ENCODE measurements at regions of chr2 and their contacts with region 1.

Region 1: GRCh38 chr2:233251306-233252116 is at the start of gene ATG16L1:
- DNase-seq: peak; percentile 89 to 98 (median 94)
- ATAC-seq: peak; percentile 91
- H3K4me3 ChIP-seq: peak within 1 kb of the TSS; percentile 90
- H3K4me3 Mint-ChIP-seq: peak within 1 kb of the TSS; percentile 90
- H3K27ac ChIP-seq: peak within 1 kb of the TSS; percentile 72 to 88
- H3K27ac Mint-ChIP-seq: peak within 1 kb of the TSS; percentile 76
- H3K4me1 ChIP-seq: peaks cover 76% of the 10 kb centered on the region
- H3K4me1 Mint-ChIP-seq: peaks cover 77% of the 10 kb centered on the region
- H3K27me3 ChIP-seq: no peaks in the 10 kb centered on the region
- H3K27me3 Mint-ChIP-seq: no peaks in the 10 kb centered on the region
- CTCF ChIP-seq: peak; percentile 91
- total RNA-seq, gene ATG16L1: 134 to 135 TPM

Region 2: DNA sequence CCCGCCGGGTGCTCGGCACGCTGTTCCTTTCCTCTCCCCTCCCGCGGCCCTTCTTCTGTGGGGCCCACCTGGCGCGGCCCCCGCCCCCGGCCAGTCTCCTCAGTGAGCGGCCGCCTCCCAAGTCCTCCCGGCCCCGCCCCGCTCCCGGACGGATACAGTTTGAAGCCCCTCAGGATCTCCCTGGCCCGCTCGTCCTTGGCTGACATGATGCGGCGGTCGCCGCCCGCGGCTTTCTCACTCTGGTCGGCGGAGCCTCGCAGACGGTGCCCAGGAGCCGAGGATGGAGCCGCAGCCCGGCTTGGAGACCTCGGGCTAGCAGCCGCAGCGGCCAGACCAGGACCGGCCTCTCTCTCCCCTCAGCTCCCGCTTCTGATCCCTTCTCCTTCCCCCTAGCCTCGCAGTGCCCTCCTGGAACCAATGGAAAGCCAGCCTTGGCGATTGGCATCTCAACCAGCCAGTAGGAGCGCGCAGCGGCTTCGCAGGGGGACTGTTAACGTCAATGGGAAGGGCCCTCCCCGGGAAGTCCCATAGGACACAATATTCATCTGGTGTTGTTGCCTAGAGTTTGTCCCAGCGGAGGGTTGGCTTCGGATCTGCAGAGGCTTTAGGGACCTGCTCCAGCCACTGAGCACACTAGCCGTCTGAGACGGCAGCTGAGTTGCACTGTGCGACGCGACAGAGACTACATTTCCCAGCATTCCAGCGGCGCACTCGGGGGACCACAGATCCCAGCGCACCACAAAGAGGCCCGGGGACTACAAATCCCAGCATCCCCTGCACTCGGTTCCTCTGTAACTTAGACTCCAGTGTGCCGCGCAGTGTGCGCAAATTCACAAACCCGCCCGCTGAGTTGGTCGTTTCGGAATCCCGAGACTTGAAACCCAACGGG is 1470.4 kb before region 1 on chr2 and contains the start of gene PDE6D:
- CTCF ChIA-PET with region 1: no interaction called
- POLR2A ChIA-PET with region 1: no interaction called
- intact Hi-C with region 1: loop called in 1 of 2 experiments (anchors 5 kb)
- DNase-seq: peak; percentile 91 to 97 (median 95)
- ATAC-seq: peak; percentile 89
- H3K4me3 ChIP-seq: peak within 1 kb of the TSS; percentile 90
- H3K4me3 Mint-ChIP-seq: peak within 1 kb of the TSS; percentile 94
- H3K27ac ChIP-seq: peak within 1 kb of the TSS; percentile 71 to 78
- H3K27ac Mint-ChIP-seq: peak within 1 kb of the TSS; percentile 94
- H3K4me1 ChIP-seq: peaks cover 36% of the 10 kb centered on the region
- H3K4me1 Mint-ChIP-seq: peaks cover 71% of the 10 kb centered on the region
- H3K27me3 ChIP-seq: no peaks in the 10 kb centered on the region
- H3K27me3 Mint-ChIP-seq: no peaks in the 10 kb centered on the region
- CTCF ChIP-seq: no peak
- total RNA-seq, gene PDE6D: 5.9 to 7.0 TPM

Region 3: GRCh38 chr2:232611551-232612218 is 639.8 kb before region 1 on chr2:
- CTCF ChIA-PET with region 1: no interaction called
- POLR2A ChIA-PET with region 1: no interaction called
- intact Hi-C with region 1: loop called (anchors 2 to 5 kb)
- DNase-seq: peak; percentile 50 to 76 (median 56)
- ATAC-seq: peak; percentile 61
- H3K4me3 ChIP-seq: no peak overlapping the region
- H3K4me3 Mint-ChIP-seq: no peak overlapping the region
- H3K27ac ChIP-seq: no peak overlapping the region
- H3K27ac Mint-ChIP-seq: no peak overlapping the region
- H3K4me1 ChIP-seq: peaks cover 5% of the 10 kb centered on the region
- H3K4me1 Mint-ChIP-seq: no peaks in the 10 kb centered on the region
- H3K27me3 ChIP-seq: no peaks in the 10 kb centered on the region
- H3K27me3 Mint-ChIP-seq: no peaks in the 10 kb centered on the region
- CTCF ChIP-seq: peak; percentile 81

Region 4: GRCh38 chr2:232761301-232761907 is 490.1 kb before region 1 on chr2:
- CTCF ChIA-PET with region 1: no interaction called
- POLR2A ChIA-PET with region 1: no interaction called
- intact Hi-C with region 1: loop called (anchors 2 kb)
- DNase-seq: peak in 10 of 14 experiments; percentile 3 to 65 (median 30)
- ATAC-seq: peak; percentile 76
- H3K4me3 ChIP-seq: no peak overlapping the region
- H3K4me3 Mint-ChIP-seq: no peak overlapping the region
- H3K27ac ChIP-seq: no peak overlapping the region
- H3K27ac Mint-ChIP-seq: no peak overlapping the region
- H3K4me1 ChIP-seq: peaks cover 4% of the 10 kb centered on the region
- H3K4me1 Mint-ChIP-seq: peaks cover 19% of the 10 kb centered on the region
- H3K27me3 ChIP-seq: no peaks in the 10 kb centered on the region
- H3K27me3 Mint-ChIP-seq: no peaks in the 10 kb centered on the region
- CTCF ChIP-seq: peak; percentile 62

Region 5: DNA sequence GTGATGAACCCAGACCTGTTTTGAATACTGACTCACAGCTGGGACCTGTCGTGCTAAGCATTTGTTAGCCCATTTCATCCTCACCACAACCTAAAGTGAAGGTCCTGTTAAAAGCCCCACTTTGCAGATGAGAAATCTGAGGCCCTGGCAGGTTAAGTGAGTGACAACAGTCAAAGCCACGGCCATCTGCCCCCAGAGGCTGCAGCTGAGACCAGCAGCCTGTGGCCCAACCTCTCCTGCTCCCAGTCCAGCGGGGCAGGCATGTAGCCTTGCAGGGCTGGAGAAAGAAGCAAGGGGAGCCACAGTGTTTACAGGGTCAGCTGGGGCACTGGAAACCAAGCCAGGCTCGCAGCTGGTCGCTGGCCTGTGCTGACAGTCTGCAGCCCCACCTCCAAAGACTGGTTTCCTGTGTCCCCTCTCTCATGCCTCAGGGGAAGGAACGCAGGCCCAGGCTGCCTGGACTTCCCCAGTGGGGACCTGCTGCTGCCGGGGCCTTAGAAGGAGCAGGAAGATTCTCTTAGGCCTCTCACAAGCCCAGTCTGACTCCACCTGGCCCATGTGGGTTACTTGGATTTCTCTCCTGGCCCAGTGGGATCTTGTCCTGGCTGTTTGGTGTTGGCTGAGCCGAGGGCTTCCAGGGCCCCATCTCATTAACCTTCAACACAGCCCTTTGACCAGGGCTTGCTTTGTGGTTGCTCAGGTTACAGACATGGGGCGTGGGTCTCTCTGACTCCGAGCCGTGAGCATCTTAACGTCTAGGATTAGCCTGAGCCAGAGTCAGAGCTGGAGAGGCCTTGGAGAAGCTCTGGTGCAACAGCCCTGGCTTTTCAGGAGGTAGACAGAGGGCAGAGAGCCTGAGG is 189.7 kb before region 1 on chr2:
- CTCF ChIA-PET with region 1: interaction called, 10 read pairs
- POLR2A ChIA-PET with region 1: interaction called, 8 read pairs
- intact Hi-C with region 1: loop called (anchors 1 to 5 kb)
- DNase-seq: peak in 4 of 14 experiments; percentile 47 to 64 (median 57)
- ATAC-seq: no peak
- H3K4me3 ChIP-seq: peak overlapping the region; percentile 97
- H3K4me3 Mint-ChIP-seq: peak overlapping the region; percentile 90
- H3K27ac ChIP-seq: peak overlapping the region; percentile 81 to 91
- H3K27ac Mint-ChIP-seq: peak overlapping the region; percentile 95
- H3K4me1 ChIP-seq: peaks cover 69% of the 10 kb centered on the region
- H3K4me1 Mint-ChIP-seq: peaks cover 56% of the 10 kb centered on the region
- H3K27me3 ChIP-seq: no peaks in the 10 kb centered on the region
- H3K27me3 Mint-ChIP-seq: no peaks in the 10 kb centered on the region
- CTCF ChIP-seq: peak; percentile 18

Region 6: DNA sequence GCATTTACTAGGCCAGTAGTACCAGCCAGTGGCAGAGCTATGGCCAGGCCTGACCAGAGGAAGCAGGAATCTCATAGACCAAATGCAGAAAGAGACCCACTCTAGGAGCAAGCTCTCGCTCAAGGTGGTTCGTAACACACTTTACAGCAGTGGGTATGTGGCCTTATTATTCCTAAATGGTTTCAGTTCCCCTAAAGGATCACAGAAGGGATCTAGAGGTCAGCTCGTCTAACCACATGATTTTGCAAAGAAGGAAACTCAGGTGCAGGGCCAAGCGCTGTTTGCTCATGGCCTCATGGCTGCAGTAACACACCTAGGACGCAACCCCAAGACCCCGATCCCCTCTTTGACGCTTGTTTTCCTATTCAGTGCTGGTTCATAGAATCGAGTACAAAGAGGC is 65.5 kb before region 1 on chr2:
- CTCF ChIA-PET with region 1: interaction called, 5 read pairs
- POLR2A ChIA-PET with region 1: no interaction called
- intact Hi-C with region 1: loop called in 1 of 2 experiments (anchors 10 kb)
- DNase-seq: peak in 1 of 14 experiments; percentile 35
- ATAC-seq: no peak
- H3K4me3 ChIP-seq: no peak overlapping the region
- H3K4me3 Mint-ChIP-seq: no peak overlapping the region
- H3K27ac ChIP-seq: no peak overlapping the region
- H3K27ac Mint-ChIP-seq: peak overlapping the region; percentile 7
- H3K4me1 ChIP-seq: no peaks in the 10 kb centered on the region
- H3K4me1 Mint-ChIP-seq: no peaks in the 10 kb centered on the region
- H3K27me3 ChIP-seq: no peaks in the 10 kb centered on the region
- H3K27me3 Mint-ChIP-seq: no peaks in the 10 kb centered on the region
- CTCF ChIP-seq: no peak

Region 7: DNA sequence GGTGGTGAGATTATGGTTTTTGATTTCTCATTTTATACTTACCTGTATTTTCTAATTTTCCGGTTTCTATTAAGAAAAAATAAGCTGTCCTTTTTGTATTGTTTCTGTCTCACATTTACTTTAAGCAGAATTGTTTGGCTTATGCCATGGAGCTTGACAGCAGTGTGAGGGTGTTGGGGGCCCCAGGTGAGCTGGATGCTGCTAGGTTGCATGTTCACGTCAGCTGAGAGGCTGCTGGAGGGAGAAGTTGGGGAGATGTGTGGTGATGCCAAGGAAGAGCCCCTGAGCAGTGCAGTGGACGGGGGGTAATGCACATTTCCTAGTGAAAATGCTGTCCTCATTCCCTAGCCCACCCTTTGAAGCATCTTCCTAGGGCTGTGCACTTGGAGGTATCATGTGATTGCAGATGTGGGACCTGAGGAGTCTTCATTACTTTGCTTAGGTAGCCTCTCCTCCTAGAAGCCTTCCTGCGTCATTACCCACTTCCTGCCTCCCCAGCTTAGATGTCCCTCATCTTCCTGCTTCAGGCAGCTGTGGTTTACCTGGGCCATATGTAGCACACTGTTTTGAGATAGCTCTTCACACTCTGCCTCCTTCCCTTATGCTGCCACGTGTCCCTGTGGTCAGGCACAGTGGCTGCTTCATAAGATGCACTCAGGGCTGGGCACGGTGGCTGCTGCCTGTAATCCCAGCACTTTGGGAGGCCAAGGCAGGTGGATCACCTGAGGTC is 16.2 kb after region 1 on chr2:
- CTCF ChIA-PET with region 1: interaction called, 25 read pairs
- POLR2A ChIA-PET with region 1: interaction called, 82 read pairs
- intact Hi-C with region 1: loop called (anchors 1 kb)
- DNase-seq: peak; percentile 64 to 96 (median 74)
- ATAC-seq: peak; percentile 88
- H3K4me3 ChIP-seq: peak overlapping the region; percentile 26
- H3K4me3 Mint-ChIP-seq: peak overlapping the region; percentile 62
- H3K27ac ChIP-seq: peak overlapping the region; percentile 86 to 88
- H3K27ac Mint-ChIP-seq: peak overlapping the region; percentile 97
- H3K4me1 ChIP-seq: peaks cover 57% of the 10 kb centered on the region
- H3K4me1 Mint-ChIP-seq: peaks cover 74% of the 10 kb centered on the region
- H3K27me3 ChIP-seq: no peaks in the 10 kb centered on the region
- H3K27me3 Mint-ChIP-seq: no peaks in the 10 kb centered on the region
- CTCF ChIP-seq: no peak

Region 8: DNA sequence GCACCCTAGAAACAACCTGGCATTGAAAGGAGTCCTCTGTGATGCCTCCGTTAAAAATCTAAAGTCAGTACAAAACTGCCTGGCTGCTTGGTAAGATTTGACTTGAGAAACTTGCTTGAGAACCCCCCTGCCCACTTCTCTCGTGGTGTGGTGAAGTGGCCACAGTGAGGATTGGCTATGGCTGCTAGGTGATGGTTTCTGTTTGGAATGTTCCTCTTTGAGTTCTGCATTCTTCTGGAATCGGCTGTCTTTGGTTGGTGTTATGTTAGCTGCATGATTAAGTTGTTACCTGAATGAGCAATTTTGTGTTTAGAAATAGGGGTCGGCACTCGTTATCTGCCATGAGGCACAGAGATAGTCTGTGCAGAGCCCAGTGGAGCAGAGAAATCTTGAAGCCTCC is 34.4 kb after region 1 on chr2:
- CTCF ChIA-PET with region 1: no interaction called
- POLR2A ChIA-PET with region 1: no interaction called
- intact Hi-C with region 1: no loop called
- DNase-seq: no peak
- ATAC-seq: no peak
- H3K4me3 ChIP-seq: no peak overlapping the region
- H3K4me3 Mint-ChIP-seq: no peak overlapping the region
- H3K27ac ChIP-seq: no peak overlapping the region
- H3K27ac Mint-ChIP-seq: peak overlapping the region; percentile 56
- H3K4me1 ChIP-seq: peaks cover 4% of the 10 kb centered on the region
- H3K4me1 Mint-ChIP-seq: peaks cover 29% of the 10 kb centered on the region
- H3K27me3 ChIP-seq: no peaks in the 10 kb centered on the region
- H3K27me3 Mint-ChIP-seq: no peaks in the 10 kb centered on the region
- CTCF ChIP-seq: no peak

Region 9: GRCh38 chr2:233413559-233414272 is 162.2 kb after region 1 on chr2:
- CTCF ChIA-PET with region 1: no interaction called
- POLR2A ChIA-PET with region 1: no interaction called
- intact Hi-C with region 1: no loop called
- DNase-seq: peak in 13 of 14 experiments; percentile 35 to 80 (median 61)
- ATAC-seq: peak; percentile 28
- H3K4me3 ChIP-seq: no peak overlapping the region
- H3K4me3 Mint-ChIP-seq: peak overlapping the region; percentile 68
- H3K27ac ChIP-seq: peak overlapping the region; percentile 6 to 38
- H3K27ac Mint-ChIP-seq: peak overlapping the region; percentile 95
- H3K4me1 ChIP-seq: peaks cover 71% of the 10 kb centered on the region
- H3K4me1 Mint-ChIP-seq: peaks cover 98% of the 10 kb centered on the region
- H3K27me3 ChIP-seq: no peaks in the 10 kb centered on the region
- H3K27me3 Mint-ChIP-seq: no peaks in the 10 kb centered on the region
- CTCF ChIP-seq: no peak

Measured in CD4-positive, alpha-beta T cell (primary cell).